ENCODE measurements at regions of chr6 and their contacts with region 1.

Region 1: GRCh38 chr6:125584468-125585029 is 164.9 kb upstream of the HEY2 start:
- DNase-seq: peak; percentile 83 to 88
- ATAC-seq: peak; percentile 97 to 98
- H3K4me3 ChIP-seq: peak overlapping the region in 2 of 4 donors; percentile 12 to 25
- H3K27ac ChIP-seq: peak overlapping the region; percentile 84 to 88 (median 87)
- H3K4me1 ChIP-seq: peaks cover 14 to 17% of the 10 kb centered on the region in 2 donors
- H3K27me3 ChIP-seq: no peaks in the 10 kb centered on the region
- CTCF ChIP-seq: peak; percentile 34 to 62 (median 44)
- POLR2A ChIP-seq: peak in 1 of 2 donors; percentile 34

Region 2: DNA sequence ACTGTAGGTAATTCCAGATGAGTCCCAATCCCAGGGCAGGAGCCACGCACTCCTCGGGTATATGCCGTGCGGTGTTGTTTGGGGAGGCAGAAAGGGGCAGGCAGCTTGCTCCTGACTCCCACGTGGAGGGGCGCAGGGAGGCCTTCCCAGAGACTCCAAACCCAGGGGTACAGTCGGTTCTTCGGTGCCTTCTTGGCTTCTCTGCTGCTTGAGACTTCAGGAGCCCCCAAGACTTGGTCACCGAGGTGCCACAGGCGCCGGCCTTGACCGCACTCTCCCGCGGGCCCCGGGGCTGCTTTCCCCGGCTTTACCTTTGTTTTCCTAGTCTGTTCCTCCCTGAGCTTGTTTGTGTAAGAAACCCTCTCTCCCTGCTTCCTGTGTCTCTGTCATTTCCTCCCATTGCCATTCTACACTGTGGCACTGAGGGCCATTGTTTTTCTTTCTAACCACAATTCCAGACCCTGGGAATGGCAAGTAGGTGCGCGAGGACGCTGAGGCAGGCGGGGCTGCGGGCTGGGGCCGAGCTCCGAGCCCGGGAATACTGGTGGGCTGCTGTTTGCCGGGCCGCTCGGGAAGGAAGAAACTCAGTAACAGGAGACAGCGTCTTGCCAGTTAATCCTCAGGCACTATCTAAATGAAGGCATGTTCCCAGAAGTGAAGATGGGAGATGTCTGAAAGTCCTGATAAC is 50.7 kb before region 1 on chr6:
- in situ Hi-C with region 1: no loop called
- intact Hi-C with region 1: loop called (anchors 5 kb)
- DNase-seq: no peak
- ATAC-seq: peak in 1 of 2 donors; percentile 51
- H3K4me3 ChIP-seq: peak overlapping the region; percentile 3 to 39 (median 32)
- H3K27ac ChIP-seq: peak overlapping the region in 3 of 4 donors; percentile 24 to 57 (median 48)
- H3K4me1 ChIP-seq: peaks cover 5 to 10% of the 10 kb centered on the region in 2 donors
- H3K27me3 ChIP-seq: no peaks in the 10 kb centered on the region
- CTCF ChIP-seq: no peak
- POLR2A ChIP-seq: no peak

Region 3: GRCh38 chr6:125598422-125598821 is 13.9 kb after region 1 on chr6:
- in situ Hi-C with region 1: no loop called
- intact Hi-C with region 1: loop called (anchors 1 kb)
- DNase-seq: peak; percentile 83 to 95
- ATAC-seq: peak; percentile 97 to 98
- H3K4me3 ChIP-seq: peak overlapping the region in 3 of 4 donors; percentile 20 to 39 (median 30)
- H3K27ac ChIP-seq: peak overlapping the region; percentile 84 to 95 (median 90)
- H3K4me1 ChIP-seq: peaks cover 29 to 30% of the 10 kb centered on the region in 2 donors
- H3K27me3 ChIP-seq: no peaks in the 10 kb centered on the region
- CTCF ChIP-seq: no peak
- POLR2A ChIP-seq: peak in 1 of 2 donors; percentile 21

Region 4: DNA sequence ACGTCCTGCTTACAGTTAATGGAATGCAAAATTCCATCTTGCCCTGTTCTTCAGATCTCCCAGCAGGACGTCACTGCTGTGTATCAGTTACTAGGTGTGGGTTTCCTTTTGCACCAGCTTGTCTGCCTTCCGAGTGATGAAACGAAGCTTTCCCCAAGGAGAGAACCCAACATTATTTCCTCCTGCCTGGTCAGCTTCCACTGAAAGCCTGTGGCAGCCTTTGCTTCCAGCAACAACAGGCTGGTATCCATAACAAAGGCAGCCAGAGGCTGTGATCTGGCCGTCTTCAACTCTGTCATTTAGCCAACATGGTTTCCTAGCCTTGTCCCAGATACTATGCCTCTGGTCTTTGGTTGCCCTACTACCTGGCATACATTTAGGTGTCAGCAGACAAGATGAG is 86.0 kb after region 1 on chr6:
- in situ Hi-C with region 1: no loop called
- intact Hi-C with region 1: loop called (anchors 1 kb)
- DNase-seq: peak; percentile 13 to 78
- ATAC-seq: peak; percentile 83 to 96
- H3K4me3 ChIP-seq: peak overlapping the region in 1 of 4 donors; percentile 23
- H3K27ac ChIP-seq: peak overlapping the region; percentile 59 to 80 (median 70)
- H3K4me1 ChIP-seq: peaks cover 10 to 18% of the 10 kb centered on the region in 2 donors
- H3K27me3 ChIP-seq: no peaks in the 10 kb centered on the region
- CTCF ChIP-seq: no peak
- POLR2A ChIP-seq: no peak

Measured in gastrocnemius medialis (tissue), 4 donors.